ENCODE measurements at regions of chr11 and their contacts with region 1.

Region 1: DNA sequence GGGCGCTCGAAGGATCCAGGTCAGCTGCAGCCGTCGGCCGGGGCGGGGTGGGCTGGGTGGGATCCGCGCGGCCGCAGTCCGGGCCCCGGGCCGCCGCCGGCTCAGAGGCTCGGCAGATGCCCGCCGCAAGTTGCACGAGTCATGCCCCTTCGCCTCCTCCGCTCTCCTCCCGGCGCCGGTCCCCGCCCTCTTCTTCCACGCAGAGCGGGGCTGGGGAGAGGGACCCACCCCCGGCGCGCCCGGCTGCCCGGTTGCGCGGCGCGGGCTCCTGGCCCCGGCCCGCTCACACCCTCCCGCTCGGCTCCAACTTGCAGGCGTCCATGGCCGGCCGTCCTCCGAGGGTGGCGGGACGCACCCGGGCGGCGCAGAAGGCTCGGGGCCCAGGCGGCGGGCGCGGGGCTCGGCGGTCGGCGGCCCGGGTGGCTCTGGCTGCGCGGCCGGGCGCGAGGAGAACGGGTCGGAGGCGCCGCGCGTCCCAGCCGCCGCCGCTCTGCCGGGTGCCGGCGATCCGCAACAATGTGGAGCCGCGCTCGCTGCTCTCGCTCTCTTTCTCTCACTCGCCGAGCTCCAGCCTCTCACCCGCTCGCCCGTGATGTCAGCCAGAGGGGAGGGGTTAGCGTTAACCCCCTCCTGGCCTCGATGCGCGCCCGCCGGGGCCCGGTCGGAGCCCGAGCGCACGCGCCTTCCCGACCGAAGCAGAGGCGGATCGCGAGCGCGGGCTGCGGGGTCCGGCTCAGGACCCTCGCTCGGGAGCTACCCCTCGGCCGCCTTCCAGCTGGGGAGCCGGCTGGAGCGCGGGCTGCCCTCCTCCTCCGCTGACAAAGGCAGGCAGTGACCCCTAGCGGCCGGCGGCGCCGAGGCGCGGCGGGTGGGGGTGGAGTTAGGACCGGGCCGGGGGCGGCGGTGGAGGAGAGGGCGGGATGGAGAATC is at the start of gene NECTIN1:
- DNase-seq: peak; percentile 78 to 98
- H3K4me3 ChIP-seq: peak within 1 kb of the TSS; percentile 42
- CTCF ChIP-seq: peak in 1 of 3 donors; percentile 69
- POLR2A ChIP-seq: no peak
- total RNA-seq, gene NECTIN1: 111 to 142 (median 130) TPM

Region 2: DNA sequence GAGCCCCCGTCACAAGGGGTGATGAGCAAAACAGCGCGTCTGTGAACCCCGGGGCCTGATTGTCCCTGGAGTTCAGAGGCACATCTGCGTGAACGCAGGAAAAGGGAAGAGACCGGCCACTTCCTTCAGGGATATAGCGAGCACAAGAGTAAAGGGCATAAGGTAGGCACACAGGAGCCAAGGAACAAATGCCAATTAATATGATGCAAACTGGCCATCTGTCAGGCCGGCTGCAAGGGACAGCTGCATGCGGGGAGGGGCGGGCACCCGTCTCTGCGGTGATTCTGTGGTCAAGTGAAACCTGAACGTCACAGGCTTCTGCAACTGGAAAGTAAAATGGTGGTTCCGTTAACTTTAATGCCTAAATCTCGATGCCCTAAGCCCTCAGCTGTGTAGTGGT is 344.3 kb after region 1 on chr11:
- intact Hi-C with region 1: no loop called
- DNase-seq: no peak
- H3K4me3 ChIP-seq: no peak overlapping the region
- CTCF ChIP-seq: no peak
- POLR2A ChIP-seq: no peak

Region 3: GRCh38 chr11:120108154-120108865 is 379.4 kb after region 1 on chr11:
- intact Hi-C with region 1: loop called (anchors 10 kb)
- DNase-seq: peak in 1 of 2 donors; percentile 94
- H3K4me3 ChIP-seq: no peak overlapping the region
- CTCF ChIP-seq: peak in 1 of 3 donors; percentile 56
- POLR2A ChIP-seq: no peak